Esophagus muscularis mucosa (tissue), 4 donors: ENCODE measurements at regions of chr14 and their contacts with region 1.

Region 1: GRCh38 chr14:35215110-35215876 is 76.9 kb upstream of the PSMA6 start:
- DNase-seq: no peak
- H3K4me3 ChIP-seq: no peak overlapping the region
- H3K27ac ChIP-seq: peak overlapping the region; percentile 45 to 50 (median 48)
- H3K4me1 ChIP-seq: peaks cover 0 to 26% (median 21%) of the 10 kb centered on the region in 4 donors
- H3K27me3 ChIP-seq: no peaks in the 10 kb centered on the region
- CTCF ChIP-seq: peak; percentile 60 to 75 (median 69)
- EP300 ChIP-seq: no peak
- POLR2A ChIP-seq: no peak

Region 2: DNA sequence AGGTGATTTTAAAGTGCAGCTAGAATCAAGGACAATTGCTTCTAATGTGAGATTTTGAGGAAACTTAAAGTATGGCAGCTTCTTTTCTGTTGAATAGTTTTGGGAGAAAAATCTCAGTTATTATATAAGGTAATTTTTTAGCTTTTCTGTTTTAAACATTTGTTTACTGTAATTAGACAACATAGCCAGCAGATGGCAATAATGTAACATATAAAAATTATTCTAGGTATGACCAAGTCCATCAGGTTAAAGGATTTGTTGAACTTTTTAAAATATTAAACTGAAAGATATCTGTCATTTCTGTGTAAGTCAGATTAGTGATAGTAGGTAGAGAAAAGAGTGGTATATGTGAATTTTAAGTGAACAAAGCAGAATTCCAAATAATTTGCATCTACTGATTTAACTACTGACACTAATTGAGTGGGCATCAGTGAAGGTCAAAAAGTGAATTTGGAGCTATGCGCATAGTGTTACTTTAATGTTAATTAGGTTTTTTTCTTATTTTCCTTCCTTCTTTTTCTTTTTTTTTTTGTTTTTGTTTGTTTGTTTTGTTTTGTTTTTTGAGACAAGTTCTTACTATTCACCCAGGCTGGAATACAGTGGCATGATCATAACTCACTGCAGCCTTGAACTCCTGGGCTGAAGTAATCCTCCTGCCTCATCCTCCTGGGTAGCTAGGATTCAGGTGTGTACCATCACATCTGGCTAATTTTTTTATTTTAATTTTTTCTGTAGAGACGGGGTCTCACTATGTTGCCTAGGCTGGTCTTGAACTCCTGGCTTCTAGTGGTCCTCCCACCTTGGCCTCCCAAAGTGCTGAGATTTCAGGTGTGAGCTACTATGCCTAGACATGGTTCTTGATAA is 74.3 kb before region 1 on chr14:
- intact Hi-C with region 1: loop called (anchors 5 kb)
- DNase-seq: no peak
- H3K4me3 ChIP-seq: no peak overlapping the region
- H3K27ac ChIP-seq: no peak overlapping the region
- H3K4me1 ChIP-seq: no peaks in the 10 kb centered on the region
- H3K27me3 ChIP-seq: no peaks in the 10 kb centered on the region
- CTCF ChIP-seq: peak in 1 of 3 experiments; percentile 35
- EP300 ChIP-seq: no peak
- POLR2A ChIP-seq: no peak

Region 3: GRCh38 chr14:35161231-35161630 is 54.1 kb before region 1 on chr14:
- intact Hi-C with region 1: no loop called
- DNase-seq: no peak
- H3K4me3 ChIP-seq: no peak overlapping the region
- H3K27ac ChIP-seq: no peak overlapping the region
- H3K4me1 ChIP-seq: peaks cover under 1 to 10% (median 3%) of the 10 kb centered on the region in 4 donors
- H3K27me3 ChIP-seq: no peaks in the 10 kb centered on the region
- CTCF ChIP-seq: no peak
- EP300 ChIP-seq: no peak
- POLR2A ChIP-seq: no peak

Region 4: DNA sequence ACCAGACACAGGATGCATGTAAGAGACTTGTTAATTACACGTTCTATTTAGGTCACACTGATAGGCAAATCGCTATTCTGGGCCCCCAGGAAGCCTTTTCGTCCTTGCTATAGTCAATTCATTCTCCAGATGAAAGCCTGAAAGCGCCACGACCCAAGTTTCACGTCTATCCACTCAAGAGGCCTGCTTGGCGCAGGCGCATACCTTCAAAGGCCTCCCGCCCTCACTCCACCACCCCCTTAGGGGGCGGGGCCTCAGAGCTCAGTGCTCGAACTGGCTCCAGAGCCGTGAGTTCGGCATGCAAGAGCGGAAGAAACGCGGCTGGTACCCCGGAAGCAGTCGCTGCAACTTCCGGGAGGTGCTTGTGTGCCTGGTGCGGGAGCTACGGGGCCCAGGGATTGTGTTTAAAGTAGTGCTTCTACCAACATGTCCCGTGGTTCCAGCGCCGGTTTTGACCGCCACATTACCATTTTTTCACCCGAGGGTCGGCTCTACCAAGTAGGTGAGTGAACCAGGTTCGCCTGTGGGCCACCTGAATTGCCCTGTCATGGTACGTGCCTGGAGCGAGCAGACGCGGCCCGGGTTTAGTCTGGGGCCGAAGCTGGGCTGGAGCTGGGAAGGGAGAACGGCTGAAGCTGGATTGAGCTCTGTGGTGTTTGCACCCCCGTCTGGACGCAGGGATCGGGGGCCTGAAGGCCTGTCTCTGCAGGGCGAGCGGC is 76.9 kb after region 1 on chr14 and contains the start of gene PSMA6:
- intact Hi-C with region 1: loop called (anchors 5 kb)
- DNase-seq: peak; percentile 100
- H3K4me3 ChIP-seq: peak within 1 kb of the TSS; percentile 72 to 91 (median 83)
- H3K27ac ChIP-seq: peak within 1 kb of the TSS; percentile 86 to 94 (median 90)
- H3K4me1 ChIP-seq: peaks cover 38 to 59% (median 51%) of the 10 kb centered on the region in 4 donors
- H3K27me3 ChIP-seq: no peaks in the 10 kb centered on the region
- CTCF ChIP-seq: peak in 1 of 3 experiments; percentile 7
- EP300 ChIP-seq: no peak
- POLR2A ChIP-seq: peak; percentile 61
- total RNA-seq, gene PSMA6: 70.5 to 143 (median 112) TPM

Region 5: DNA sequence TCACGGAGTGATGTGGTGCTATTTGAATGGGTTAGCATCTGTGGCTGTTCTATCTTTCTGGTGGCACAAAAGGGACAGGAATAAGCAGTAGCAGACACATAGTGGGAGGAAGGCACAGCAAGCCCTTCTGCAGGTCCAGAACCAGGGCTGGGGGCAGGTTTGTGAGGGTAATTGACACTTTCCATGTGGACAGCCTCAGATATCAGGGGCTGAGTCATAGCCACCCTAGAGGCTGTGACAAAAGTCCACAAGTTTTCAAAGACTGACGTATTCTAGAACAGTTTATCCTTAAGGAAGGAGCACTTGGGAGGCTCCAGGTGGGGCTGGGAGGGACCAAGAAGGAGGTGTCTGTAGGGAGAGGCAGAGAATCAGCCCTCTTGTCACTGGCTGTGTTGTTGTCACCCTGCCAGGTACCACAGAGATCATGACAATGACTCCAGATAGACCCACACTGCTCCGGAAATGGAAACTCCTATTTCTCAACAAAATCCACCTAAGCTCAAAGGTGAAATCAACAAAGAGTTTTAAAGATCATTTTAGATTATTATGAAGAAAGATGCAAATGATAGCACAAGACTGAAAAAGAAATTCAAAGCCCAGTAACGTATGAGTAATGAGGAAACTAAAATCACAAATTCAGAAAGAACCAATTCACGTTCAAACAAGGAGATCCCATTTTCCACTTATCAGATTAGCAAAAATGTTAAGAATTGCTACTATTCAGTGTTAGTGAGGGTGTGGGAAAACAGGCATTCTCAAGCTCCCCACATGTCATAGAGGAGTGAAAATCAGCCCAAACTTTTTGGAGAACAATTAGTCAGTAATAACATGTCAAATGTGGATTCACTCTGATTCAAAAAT is 140.9 kb after region 1 on chr14:
- intact Hi-C with region 1: no loop called
- DNase-seq: no peak
- H3K4me3 ChIP-seq: no peak overlapping the region
- H3K27ac ChIP-seq: no peak overlapping the region
- H3K4me1 ChIP-seq: peaks cover 0 to 12% (median 4%) of the 10 kb centered on the region in 4 donors
- H3K27me3 ChIP-seq: no peaks in the 10 kb centered on the region
- CTCF ChIP-seq: no peak
- EP300 ChIP-seq: no peak
- POLR2A ChIP-seq: no peak

Region 6: GRCh38 chr14:35414365-35414764 is 199.1 kb after region 1 on chr14:
- intact Hi-C with region 1: loop called (anchors 1 kb)
- DNase-seq: no peak
- H3K4me3 ChIP-seq: no peak overlapping the region
- H3K27ac ChIP-seq: peak overlapping the region; percentile 35 to 70 (median 52)
- H3K4me1 ChIP-seq: peaks cover 24 to 37% (median 35%) of the 10 kb centered on the region in 4 donors
- H3K27me3 ChIP-seq: no peaks in the 10 kb centered on the region
- CTCF ChIP-seq: no peak
- EP300 ChIP-seq: no peak
- POLR2A ChIP-seq: no peak